ENCODE measurements at regions of chr6 and their contacts with region 1.

Region 1: DNA sequence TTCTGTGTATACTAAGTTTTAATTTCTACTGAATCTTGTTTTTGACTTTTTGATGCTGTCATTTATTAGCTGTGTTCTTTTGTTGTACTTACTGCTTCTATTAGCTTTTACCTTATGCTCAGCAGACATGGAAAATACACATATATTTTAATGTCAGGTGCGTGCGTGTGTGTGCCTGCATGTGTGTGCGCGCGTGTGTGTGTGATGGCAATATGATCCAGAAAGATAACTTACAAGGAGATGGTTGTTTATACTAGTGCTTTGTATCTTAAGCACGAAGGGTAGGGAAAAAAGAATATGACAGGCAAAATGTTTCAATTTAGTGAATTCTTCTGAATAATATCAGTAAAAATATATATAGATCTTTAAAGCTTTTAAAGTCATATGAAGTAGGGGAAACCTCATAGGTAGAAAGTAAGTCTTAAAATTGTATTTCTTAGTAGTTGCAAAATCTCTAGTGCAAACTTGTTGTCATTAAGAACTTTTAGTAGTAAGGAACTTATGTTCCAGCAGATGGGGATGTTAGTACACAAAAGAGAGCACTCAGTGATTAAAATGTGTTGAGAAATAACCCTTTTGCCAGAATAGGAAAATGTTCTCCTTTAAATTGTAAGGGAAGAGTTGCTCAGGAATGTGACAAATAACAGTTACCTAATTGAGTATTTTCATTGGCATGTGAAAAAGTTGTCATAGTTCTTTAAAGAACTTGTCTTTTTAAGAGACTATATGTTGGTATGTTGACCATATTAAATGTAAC is 13.2 kb downstream of the QKI start:
- DNase-seq: no peak

Region 2: GRCh38 chr6:163554663-163555062 is 127.0 kb after region 1 on chr6:
- intact Hi-C with region 1: loop called (anchors 10 kb)
- DNase-seq: no peak

Region 3: DNA sequence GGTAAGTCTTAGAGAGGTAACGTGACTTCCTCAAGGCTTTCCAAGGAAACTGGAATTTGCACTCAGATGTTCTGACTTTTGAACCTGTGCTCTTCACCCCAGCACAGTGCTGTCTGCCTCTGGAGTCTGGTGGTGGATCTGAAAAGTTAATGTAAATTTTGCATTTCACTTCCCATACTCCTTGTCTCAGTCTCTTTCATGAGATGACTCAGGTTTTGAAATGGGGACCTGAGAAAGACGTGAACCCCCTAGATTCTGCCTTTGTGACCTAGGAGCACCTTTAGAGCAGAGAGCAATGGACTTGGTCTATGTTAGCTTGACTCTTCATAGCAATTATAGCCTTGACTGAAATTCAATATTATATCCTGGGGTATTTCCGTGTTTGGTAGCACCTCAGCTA is 209.8 kb after region 1 on chr6:
- intact Hi-C with region 1: no loop called
- DNase-seq: no peak

Region 4: GRCh38 chr6:163883984-163884383 is 456.3 kb after region 1 on chr6:
- intact Hi-C with region 1: no loop called
- DNase-seq: no peak

Measured in cardiac septum (tissue), 1 donor.